A673 (cell line): ENCODE measurements at regions of chr5 and their contacts with region 1.

Region 1: GRCh38 chr5:17216176-17216973 is 1.1 kb upstream of the BASP1 start:
- DNase-seq: peak; percentile 94
- H3K4me3 ChIP-seq: peak overlapping the region; percentile 91
- H3K27ac ChIP-seq: peak overlapping the region; percentile 87
- H3K4me1 ChIP-seq: peaks cover 35% of the 10 kb centered on the region
- H3K27me3 ChIP-seq: no peaks in the 10 kb centered on the region
- CTCF ChIP-seq: peak; percentile 83

Region 2: DNA sequence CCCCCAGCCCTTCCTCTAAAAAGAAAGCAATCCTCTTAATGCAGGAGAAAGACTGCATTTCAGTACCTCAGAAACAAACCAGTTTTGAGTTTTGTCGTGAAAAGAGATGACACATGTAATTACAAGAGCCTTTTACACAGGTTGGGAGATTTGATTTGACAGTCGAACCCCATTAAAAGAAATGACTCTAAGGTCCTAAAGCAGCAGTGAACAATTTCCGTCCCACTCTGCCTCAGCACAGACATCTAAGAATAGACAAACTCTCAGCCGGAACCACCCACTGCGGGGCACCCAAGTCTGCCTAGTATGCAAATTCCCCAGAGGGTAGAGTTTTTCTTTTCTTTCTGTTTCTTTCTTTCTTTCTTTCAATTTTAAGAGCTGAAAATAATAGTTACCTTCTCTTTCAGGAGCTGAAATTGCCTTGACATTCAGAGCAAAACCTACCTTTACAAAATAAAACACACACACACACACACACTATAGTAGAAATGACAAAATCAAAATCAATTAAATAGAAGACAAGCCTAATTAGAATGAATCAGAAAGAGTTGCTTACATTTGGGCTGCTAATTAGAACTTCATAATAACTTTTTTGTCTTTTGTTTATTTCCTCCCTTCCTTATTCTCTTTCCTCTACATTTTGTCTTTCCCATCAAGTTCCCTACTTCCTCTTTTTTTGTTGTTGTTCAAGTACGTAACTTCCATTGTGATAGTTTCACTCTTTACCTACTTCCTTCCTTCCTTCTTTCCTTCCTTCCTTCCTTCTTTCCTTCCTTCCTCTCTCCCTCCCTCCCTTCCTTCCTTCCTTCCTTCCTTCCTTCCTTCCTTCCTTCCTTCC is 66.1 kb after region 1 on chr5:
- CTCF ChIA-PET with region 1: interaction called, 7 read pairs
- POLR2A ChIA-PET with region 1: no interaction called
- intact Hi-C with region 1: loop called (anchors 2 kb)
- DNase-seq: peak; percentile 98
- H3K4me3 ChIP-seq: peak overlapping the region; percentile 30
- H3K27ac ChIP-seq: peak overlapping the region; percentile 97
- H3K4me1 ChIP-seq: peaks cover 68% of the 10 kb centered on the region
- H3K27me3 ChIP-seq: no peaks in the 10 kb centered on the region
- CTCF ChIP-seq: no peak

Region 3: GRCh38 chr5:17477573-17478265 is 261.3 kb after region 1 on chr5:
- CTCF ChIA-PET with region 1: interaction called, 4 read pairs
- POLR2A ChIA-PET with region 1: no interaction called
- intact Hi-C with region 1: loop called (anchors 5 kb)
- DNase-seq: peak; percentile 6
- H3K4me3 ChIP-seq: no peak overlapping the region
- H3K27ac ChIP-seq: no peak overlapping the region
- H3K4me1 ChIP-seq: peaks cover 21% of the 10 kb centered on the region
- H3K27me3 ChIP-seq: no peaks in the 10 kb centered on the region
- CTCF ChIP-seq: no peak

Region 4: DNA sequence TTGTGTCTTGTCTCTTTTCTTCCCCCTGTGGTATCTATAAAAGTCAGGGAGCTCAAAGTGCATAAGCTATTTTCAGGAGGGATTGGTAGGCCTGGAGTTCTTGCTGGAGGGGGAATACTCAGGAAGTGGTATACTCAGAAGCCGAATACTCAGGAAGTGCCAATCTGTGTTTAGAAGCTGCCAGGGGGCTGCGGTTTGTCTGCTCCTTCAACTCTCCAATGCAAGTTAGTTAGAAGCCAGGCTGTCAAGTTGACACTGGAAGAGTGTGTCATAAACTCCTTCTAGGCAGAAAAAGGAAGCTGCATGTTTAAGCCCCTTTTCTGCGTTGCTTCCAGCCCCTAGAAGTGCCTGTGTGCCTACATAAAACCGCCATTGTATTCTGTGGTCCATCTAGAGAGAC is 784.4 kb after region 1 on chr5:
- CTCF ChIA-PET with region 1: no interaction called
- POLR2A ChIA-PET with region 1: no interaction called
- intact Hi-C with region 1: loop called (anchors 10 kb)
- DNase-seq: peak; percentile 60
- H3K4me3 ChIP-seq: no peak overlapping the region
- H3K27ac ChIP-seq: peak overlapping the region; percentile 42
- H3K4me1 ChIP-seq: peaks cover 10% of the 10 kb centered on the region
- H3K27me3 ChIP-seq: no peaks in the 10 kb centered on the region
- CTCF ChIP-seq: no peak

Region 5: GRCh38 chr5:18281682-18282557 is 1065.5 kb after region 1 on chr5:
- CTCF ChIA-PET with region 1: interaction called, 6 read pairs
- POLR2A ChIA-PET with region 1: interaction called, 5 read pairs
- intact Hi-C with region 1: loop called (anchors 1 kb)
- DNase-seq: peak; percentile 77
- H3K4me3 ChIP-seq: no peak overlapping the region
- H3K27ac ChIP-seq: no peak overlapping the region
- H3K4me1 ChIP-seq: no peaks in the 10 kb centered on the region
- H3K27me3 ChIP-seq: no peaks in the 10 kb centered on the region
- CTCF ChIP-seq: peak; percentile 72

Region 6: GRCh38 chr5:18312016-18312415 is 1095.6 kb after region 1 on chr5:
- CTCF ChIA-PET with region 1: interaction called, 3 read pairs
- POLR2A ChIA-PET with region 1: no interaction called
- intact Hi-C with region 1: loop called (anchors 2 kb)
- DNase-seq: no peak
- H3K4me3 ChIP-seq: no peak overlapping the region
- H3K27ac ChIP-seq: no peak overlapping the region
- H3K4me1 ChIP-seq: peaks cover 11% of the 10 kb centered on the region
- H3K27me3 ChIP-seq: no peaks in the 10 kb centered on the region
- CTCF ChIP-seq: no peak